Activated naive CD4-positive, alpha-beta T cell treated with anti-CD3 and anti-CD28 coated beads for 36 hours (primary cell): ENCODE measurements at regions of chr16 and their contacts with region 1.

Region 1: DNA sequence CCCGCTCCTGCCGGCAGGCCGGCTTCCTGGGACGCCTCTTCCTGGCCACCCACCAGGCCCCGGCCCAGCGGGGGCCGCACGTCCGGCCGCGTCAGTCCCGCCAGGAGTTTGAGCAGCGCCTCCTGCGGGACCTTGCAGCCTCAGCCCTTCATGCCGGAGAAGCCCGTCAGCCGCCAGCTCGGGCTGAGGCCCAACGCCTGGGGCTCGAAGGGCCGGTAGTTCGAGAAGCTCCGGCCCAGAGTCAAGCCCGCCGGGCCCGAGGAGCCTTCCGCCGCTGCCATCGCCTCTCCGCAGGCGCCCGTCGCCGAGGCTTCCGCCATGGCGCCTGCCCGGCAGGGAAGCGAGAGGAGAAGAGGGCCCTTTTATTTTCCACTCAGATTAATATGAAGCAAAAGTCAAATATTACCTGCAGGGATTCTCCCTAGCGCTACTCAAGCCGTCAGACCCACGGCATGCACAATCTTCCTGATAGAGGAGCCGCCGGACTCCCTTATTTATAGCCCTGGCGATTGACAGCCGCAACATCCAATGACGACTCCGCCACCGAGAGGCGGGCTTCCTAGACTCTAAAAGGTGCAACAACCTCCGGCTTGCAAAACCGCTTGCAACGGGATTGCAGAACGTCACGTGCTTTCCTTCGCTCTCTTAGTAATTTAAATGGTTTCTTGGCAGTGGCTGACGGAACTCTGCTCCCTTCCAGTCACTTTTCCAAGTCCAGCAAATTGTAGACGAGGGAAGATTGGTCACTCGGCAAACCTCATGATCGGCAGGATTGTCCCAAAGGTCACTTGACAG is at the start of gene SEPHS2:
- DNase-seq: peak; percentile 100
- H3K4me3 Mint-ChIP-seq: peak within 1 kb of the TSS; percentile 87
- H3K27ac Mint-ChIP-seq: peak within 1 kb of the TSS; percentile 93
- H3K4me1 Mint-ChIP-seq: peaks cover 39% of the 10 kb centered on the region
- H3K27me3 Mint-ChIP-seq: no peaks in the 10 kb centered on the region
- total RNA-seq, gene SEPHS2: 37.8 to 39.2 TPM

Region 2: GRCh38 chr16:30458561-30459394 is 13.2 kb after region 1 on chr16:
- CTCF ChIA-PET with region 1: interaction called, 43 read pairs
- intact Hi-C with region 1: no loop called
- DNase-seq: peak; percentile 95
- H3K4me3 Mint-ChIP-seq: peak overlapping the region; percentile 54
- H3K27ac Mint-ChIP-seq: peak overlapping the region; percentile 92
- H3K4me1 Mint-ChIP-seq: peaks cover 46% of the 10 kb centered on the region
- H3K27me3 Mint-ChIP-seq: no peaks in the 10 kb centered on the region

Region 3: GRCh38 chr16:30491744-30492308 is 46.2 kb after region 1 on chr16:
- CTCF ChIA-PET with region 1: interaction called, 14 read pairs
- intact Hi-C with region 1: no loop called
- DNase-seq: peak; percentile 65
- H3K4me3 Mint-ChIP-seq: no peak overlapping the region
- H3K27ac Mint-ChIP-seq: peak overlapping the region; percentile 59
- H3K4me1 Mint-ChIP-seq: peaks cover 29% of the 10 kb centered on the region
- H3K27me3 Mint-ChIP-seq: no peaks in the 10 kb centered on the region

Region 4: GRCh38 chr16:30526823-30527635 is 81.4 kb after region 1 on chr16:
- CTCF ChIA-PET with region 1: interaction called, 3 read pairs
- intact Hi-C with region 1: loop called (anchors 1 kb)
- DNase-seq: peak; percentile 97
- H3K4me3 Mint-ChIP-seq: peak overlapping the region; percentile 72
- H3K27ac Mint-ChIP-seq: peak overlapping the region; percentile 75
- H3K4me1 Mint-ChIP-seq: peaks cover 36% of the 10 kb centered on the region
- H3K27me3 Mint-ChIP-seq: no peaks in the 10 kb centered on the region

Region 5: DNA sequence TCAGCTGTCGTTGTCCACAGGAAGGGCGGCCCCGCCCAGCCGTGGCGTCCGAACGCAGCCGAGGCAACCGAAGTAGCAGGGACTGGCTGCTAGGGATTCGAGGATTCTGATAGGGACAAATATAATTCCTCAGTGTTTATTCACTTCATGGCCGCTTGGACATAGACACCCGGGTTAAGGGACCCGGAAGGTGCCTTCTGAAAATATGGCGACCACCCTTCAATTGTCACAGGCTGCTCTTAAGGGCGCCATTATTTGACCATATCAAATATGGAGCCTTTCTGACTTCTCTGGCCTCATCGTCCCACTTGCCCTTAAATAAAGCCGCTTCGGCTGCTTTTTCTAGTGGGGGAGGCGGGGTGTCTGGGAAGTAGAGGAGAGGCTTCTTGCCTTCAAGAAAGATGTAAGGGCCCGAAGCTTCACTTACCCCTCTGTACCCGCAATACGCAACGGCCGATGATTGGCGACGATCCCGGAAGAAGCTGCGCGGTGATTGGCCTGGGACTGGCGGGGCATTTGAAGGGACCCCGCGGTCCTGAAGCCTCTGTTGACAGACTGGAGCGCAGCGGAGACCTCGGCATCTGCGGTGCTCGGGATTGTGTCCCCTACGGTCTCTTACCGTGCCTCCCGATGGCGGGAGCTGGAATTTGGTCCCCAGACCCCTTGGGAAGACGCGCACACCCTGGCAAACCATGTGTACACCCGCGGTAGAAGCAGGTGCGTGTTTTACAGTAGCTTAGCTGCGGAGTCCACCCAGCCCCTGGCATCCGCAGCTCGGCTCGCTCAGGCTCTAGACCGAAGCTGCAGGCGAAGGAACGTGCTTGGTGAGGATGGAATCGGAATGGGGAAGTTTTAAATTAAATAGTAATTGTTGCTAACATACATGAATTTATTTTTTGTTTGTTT is 126.3 kb after region 1 on chr16 and contains the start of gene ZNF688:
- CTCF ChIA-PET with region 1: interaction called, 7 read pairs
- intact Hi-C with region 1: loop called (anchors 1 kb)
- DNase-seq: peak; percentile 94
- H3K4me3 Mint-ChIP-seq: peak within 1 kb of the TSS; percentile 89
- H3K27ac Mint-ChIP-seq: peak within 1 kb of the TSS; percentile 94
- H3K4me1 Mint-ChIP-seq: peaks cover 56% of the 10 kb centered on the region
- H3K27me3 Mint-ChIP-seq: no peaks in the 10 kb centered on the region
- total RNA-seq, gene ZNF688: 3.7 to 3.9 TPM

Region 6: GRCh38 chr16:30740364-30741251 is 295.0 kb after region 1 on chr16:
- CTCF ChIA-PET with region 1: no interaction called
- intact Hi-C with region 1: no loop called
- DNase-seq: no peak
- H3K4me3 Mint-ChIP-seq: no peak overlapping the region
- H3K27ac Mint-ChIP-seq: peak overlapping the region; percentile 67
- H3K4me1 Mint-ChIP-seq: peaks cover 10% of the 10 kb centered on the region
- H3K27me3 Mint-ChIP-seq: no peaks in the 10 kb centered on the region